AG04450 (cell line): ENCODE measurements at regions of chr4 and their contacts with region 1.

Region 1: GRCh38 chr4:47747211-47747610 is 90.7 kb downstream of the CORIN start:
- DNase-seq: no peak
- H3K4me3 ChIP-seq: no peak overlapping the region
- H3K27ac ChIP-seq: no peak overlapping the region
- H3K27me3 ChIP-seq: no peaks in the 10 kb centered on the region
- CTCF ChIP-seq: no peak

Region 2: DNA sequence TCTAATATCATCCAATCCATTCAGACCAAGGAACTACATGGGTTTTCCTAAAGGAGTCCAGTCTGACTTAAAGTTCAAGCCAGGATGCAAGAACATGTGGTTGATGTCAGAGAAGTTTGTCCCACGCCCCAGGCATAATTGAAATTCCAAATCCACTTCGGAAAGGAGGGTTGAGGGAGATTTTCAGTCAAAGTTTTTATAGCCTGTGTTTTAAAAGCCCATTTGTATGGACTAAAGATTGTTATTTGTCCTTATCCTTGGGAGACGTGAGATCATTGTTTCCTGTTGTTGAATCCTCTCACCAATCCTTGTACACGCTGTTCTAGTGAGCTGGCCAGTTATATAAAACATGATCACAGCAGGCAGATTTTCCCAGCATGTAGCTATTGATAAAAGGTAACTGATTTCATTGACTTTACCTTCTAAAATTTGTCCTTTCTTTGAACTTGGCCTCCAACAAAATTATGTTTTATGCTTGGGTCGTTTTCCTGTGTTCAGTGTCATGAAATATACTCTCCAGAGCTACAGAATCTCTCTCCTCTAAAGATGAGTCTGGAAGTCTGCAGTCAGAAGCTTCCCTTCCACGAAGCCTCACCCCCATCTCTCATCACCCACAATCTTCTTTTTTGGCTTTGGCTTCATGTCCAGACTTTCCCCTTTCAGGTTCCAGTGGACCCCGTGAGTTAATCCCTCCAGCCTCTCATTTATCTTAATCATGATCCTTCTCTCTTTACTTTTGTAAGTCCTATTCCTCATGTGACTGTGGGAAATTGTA is 169.2 kb before region 1 on chr4:
- CTCF ChIA-PET with region 1: no interaction called
- POLR2A ChIA-PET with region 1: no interaction called
- DNase-seq: no peak
- H3K4me3 ChIP-seq: no peak overlapping the region
- H3K27ac ChIP-seq: no peak overlapping the region
- H3K27me3 ChIP-seq: no peaks in the 10 kb centered on the region
- CTCF ChIP-seq: no peak

Region 3: GRCh38 chr4:48195374-48195773 is 448.2 kb after region 1 on chr4:
- CTCF ChIA-PET with region 1: no interaction called
- POLR2A ChIA-PET with region 1: interaction called, 11 read pairs
- DNase-seq: no peak
- H3K4me3 ChIP-seq: no peak overlapping the region
- H3K27ac ChIP-seq: no peak overlapping the region
- H3K27me3 ChIP-seq: peaks cover 3% of the 10 kb centered on the region
- CTCF ChIP-seq: no peak